Sigmoid colon (tissue), 7 donors: ENCODE measurements at regions of chr19 and their contacts with region 1.

Region 1: GRCh38 chr19:11496391-11497163 is 9.1 kb downstream of the ZNF653 start:
- DNase-seq: peak; percentile 88
- H3K4me3 ChIP-seq: no peak overlapping the region
- H3K27ac ChIP-seq: no peak overlapping the region
- H3K4me1 ChIP-seq: peaks cover 0 to 5% (median 2%) of the 10 kb centered on the region in 4 donors
- H3K27me3 ChIP-seq: no peaks in the 10 kb centered on the region
- CTCF ChIP-seq: peak; percentile 50 to 69 (median 64)
- EP300 ChIP-seq: no peak
- POLR2A ChIP-seq: no peak

Region 2: GRCh38 chr19:11587302-11587974 is 90.9 kb after region 1 on chr19:
- intact Hi-C with region 1: loop called (anchors 2 kb)
- DNase-seq: peak; percentile 86
- H3K4me3 ChIP-seq: no peak overlapping the region
- H3K27ac ChIP-seq: peak overlapping the region in 1 of 4 donors; percentile 2
- H3K4me1 ChIP-seq: no peaks in the 10 kb centered on the region
- H3K27me3 ChIP-seq: no peaks in the 10 kb centered on the region
- CTCF ChIP-seq: peak; percentile 83 to 91 (median 88)
- EP300 ChIP-seq: no peak
- POLR2A ChIP-seq: no peak